ENCODE measurements at regions of chr10 and their contacts with region 1.

Region 1: DNA sequence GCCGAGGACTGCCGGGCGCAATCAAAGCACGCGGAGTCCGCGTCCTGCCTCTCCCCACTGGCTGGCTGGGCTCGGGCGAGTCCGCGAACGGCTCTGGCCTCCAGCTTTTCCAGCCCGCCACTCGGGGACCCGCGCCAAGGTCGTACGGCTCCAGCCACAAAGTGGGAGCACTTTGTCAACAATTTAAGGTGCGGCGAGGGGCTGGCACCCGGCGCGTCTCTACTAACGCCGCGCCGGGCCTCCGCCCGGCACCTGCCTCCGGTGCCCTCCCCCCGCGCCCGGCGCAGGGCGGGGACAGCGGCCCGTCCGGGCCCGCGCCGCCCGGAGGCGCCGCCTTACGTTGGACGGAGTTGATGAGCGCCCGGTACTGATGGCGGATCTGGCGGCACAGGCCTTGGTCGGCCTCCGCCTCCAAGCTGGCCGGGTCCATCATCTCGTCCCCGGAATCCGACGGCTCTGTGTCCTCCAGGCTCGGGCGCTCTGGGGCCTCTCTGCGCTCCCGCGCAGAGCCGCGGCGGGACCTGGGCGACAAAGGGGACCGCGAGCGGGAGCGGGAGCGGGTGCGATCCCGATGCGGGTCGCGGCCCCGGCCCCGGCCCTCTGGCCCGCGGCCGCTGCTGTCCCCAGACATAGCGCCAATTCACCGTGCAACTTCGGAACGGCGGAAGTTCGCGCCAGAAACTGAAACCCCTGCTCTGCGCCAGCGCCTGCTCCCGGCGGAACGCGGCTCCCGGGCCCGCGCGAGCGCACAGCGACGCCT is at the start of gene NSMCE4A:
- DNase-seq: peak; percentile 82
- H3K4me3 ChIP-seq: peak within 1 kb of the TSS; percentile 84 to 99 (median 94)
- H3K27ac ChIP-seq: peak within 1 kb of the TSS; percentile 98 to 100 (median 100)
- H3K4me1 ChIP-seq: peaks cover 11 to 22% (median 19%) of the 10 kb centered on the region in 4 donors
- H3K27me3 ChIP-seq: no peaks in the 10 kb centered on the region
- CTCF ChIP-seq: peak in 4 of 5 experiments; percentile 66 to 75 (median 70)
- EP300 ChIP-seq: no peak
- POLR2A ChIP-seq: peak; percentile 79
- total RNA-seq, gene NSMCE4A: 71.1 to 152 (median 92.7) TPM

Region 2: GRCh38 chr10:122044045-122044661 is 69.4 kb after region 1 on chr10:
- in situ Hi-C with region 1: no loop called
- intact Hi-C with region 1: loop called (anchors 10 kb)
- DNase-seq: peak; percentile 32
- H3K4me3 ChIP-seq: no peak overlapping the region
- H3K27ac ChIP-seq: peak overlapping the region; percentile 22 to 80 (median 72)
- H3K4me1 ChIP-seq: peaks cover 5 to 22% (median 15%) of the 10 kb centered on the region in 4 donors
- H3K27me3 ChIP-seq: no peaks in the 10 kb centered on the region
- CTCF ChIP-seq: no peak
- EP300 ChIP-seq: no peak
- POLR2A ChIP-seq: no peak

Region 3: GRCh38 chr10:122056431-122057094 is 81.8 kb after region 1 on chr10:
- in situ Hi-C with region 1: no loop called
- intact Hi-C with region 1: no loop called
- DNase-seq: peak; percentile 63
- H3K4me3 ChIP-seq: no peak overlapping the region
- H3K27ac ChIP-seq: peak overlapping the region; percentile 7 to 76 (median 56)
- H3K4me1 ChIP-seq: peaks cover 0 to 29% (median 15%) of the 10 kb centered on the region in 4 donors
- H3K27me3 ChIP-seq: no peaks in the 10 kb centered on the region
- CTCF ChIP-seq: no peak
- EP300 ChIP-seq: no peak
- POLR2A ChIP-seq: no peak

Measured in transverse colon (tissue), 4 donors.